PC-3 (cell line): ENCODE measurements at regions of chr6 and their contacts with region 1.

Region 1: DNA sequence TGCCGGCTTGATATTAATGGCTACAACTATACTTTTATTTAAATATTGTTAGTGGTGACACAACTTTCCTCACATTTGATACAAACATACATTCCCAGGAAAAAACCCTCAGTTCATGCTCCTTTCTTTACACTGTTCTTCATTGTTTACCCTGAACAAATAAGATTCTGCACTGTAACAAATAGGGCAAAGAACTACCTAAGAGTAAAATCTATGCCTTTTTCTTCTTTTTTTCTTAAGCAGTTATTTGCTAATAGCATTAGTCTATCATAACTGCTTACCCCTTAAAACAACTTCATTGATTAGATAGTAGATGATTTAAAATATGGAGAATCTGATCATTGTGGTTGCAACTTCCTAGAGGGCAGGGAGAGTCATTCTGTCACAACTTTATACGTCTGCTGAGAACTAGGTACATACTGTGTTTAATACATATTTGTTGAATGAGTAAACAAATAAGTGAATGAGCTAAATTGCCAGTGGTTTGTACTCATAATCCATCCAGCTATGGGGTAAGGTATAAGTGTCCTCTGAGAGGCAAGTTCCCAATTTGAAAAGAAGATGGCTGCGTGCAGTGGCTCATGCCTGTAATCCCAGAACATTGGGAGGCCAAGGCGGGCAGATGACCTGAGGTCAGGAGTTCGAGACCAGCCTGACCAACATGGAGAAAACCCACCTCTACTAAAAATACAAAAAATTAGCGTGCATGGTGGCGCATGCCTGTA is 161.0 kb downstream of the CDK19 start:
- DNase-seq: peak; percentile 82
- ATAC-seq: peak; percentile 85
- H3K4me3 ChIP-seq: no peak overlapping the region
- H3K27ac ChIP-seq: peak overlapping the region; percentile 92
- H3K4me1 ChIP-seq: peaks cover 43% of the 10 kb centered on the region
- H3K27me3 ChIP-seq: no peaks in the 10 kb centered on the region
- CTCF ChIP-seq: no peak

Region 2: GRCh38 chr6:110664933-110665332 is 10.7 kb after region 1 on chr6:
- CTCF ChIA-PET with region 1: no interaction called
- POLR2A ChIA-PET with region 1: no interaction called
- intact Hi-C with region 1: loop called (anchors 1 kb)
- DNase-seq: peak; percentile 32
- ATAC-seq: peak; percentile 51
- H3K4me3 ChIP-seq: no peak overlapping the region
- H3K27ac ChIP-seq: peak overlapping the region; percentile 34
- H3K4me1 ChIP-seq: peaks cover 41% of the 10 kb centered on the region
- H3K27me3 ChIP-seq: no peaks in the 10 kb centered on the region
- CTCF ChIP-seq: no peak